ENCODE measurements at regions of chr19 and their contacts with region 1.

Region 1: GRCh38 chr19:57279418-57280066 is 743 bp upstream of the ZNF460 start:
- DNase-seq: peak; percentile 92
- ATAC-seq: peak; percentile 74
- H3K4me3 Mint-ChIP-seq: no peak overlapping the region
- H3K27ac Mint-ChIP-seq: no peak overlapping the region
- H3K4me1 Mint-ChIP-seq: peaks cover 31% of the 10 kb centered on the region
- H3K27me3 Mint-ChIP-seq: no peaks in the 10 kb centered on the region

Region 2: GRCh38 chr19:56538254-56538760 is 741.2 kb before region 1 on chr19:
- CTCF ChIA-PET with region 1: no interaction called
- POLR2A ChIA-PET with region 1: interaction called, 6 read pairs
- intact Hi-C with region 1: loop called in 1 of 2 experiments (anchors 1 kb)
- DNase-seq: peak; percentile 95
- ATAC-seq: peak; percentile 97
- H3K4me3 Mint-ChIP-seq: peak overlapping the region; percentile 74
- H3K27ac Mint-ChIP-seq: peak overlapping the region; percentile 87
- H3K4me1 Mint-ChIP-seq: peaks cover 15% of the 10 kb centered on the region
- H3K27me3 Mint-ChIP-seq: no peaks in the 10 kb centered on the region

Region 3: DNA sequence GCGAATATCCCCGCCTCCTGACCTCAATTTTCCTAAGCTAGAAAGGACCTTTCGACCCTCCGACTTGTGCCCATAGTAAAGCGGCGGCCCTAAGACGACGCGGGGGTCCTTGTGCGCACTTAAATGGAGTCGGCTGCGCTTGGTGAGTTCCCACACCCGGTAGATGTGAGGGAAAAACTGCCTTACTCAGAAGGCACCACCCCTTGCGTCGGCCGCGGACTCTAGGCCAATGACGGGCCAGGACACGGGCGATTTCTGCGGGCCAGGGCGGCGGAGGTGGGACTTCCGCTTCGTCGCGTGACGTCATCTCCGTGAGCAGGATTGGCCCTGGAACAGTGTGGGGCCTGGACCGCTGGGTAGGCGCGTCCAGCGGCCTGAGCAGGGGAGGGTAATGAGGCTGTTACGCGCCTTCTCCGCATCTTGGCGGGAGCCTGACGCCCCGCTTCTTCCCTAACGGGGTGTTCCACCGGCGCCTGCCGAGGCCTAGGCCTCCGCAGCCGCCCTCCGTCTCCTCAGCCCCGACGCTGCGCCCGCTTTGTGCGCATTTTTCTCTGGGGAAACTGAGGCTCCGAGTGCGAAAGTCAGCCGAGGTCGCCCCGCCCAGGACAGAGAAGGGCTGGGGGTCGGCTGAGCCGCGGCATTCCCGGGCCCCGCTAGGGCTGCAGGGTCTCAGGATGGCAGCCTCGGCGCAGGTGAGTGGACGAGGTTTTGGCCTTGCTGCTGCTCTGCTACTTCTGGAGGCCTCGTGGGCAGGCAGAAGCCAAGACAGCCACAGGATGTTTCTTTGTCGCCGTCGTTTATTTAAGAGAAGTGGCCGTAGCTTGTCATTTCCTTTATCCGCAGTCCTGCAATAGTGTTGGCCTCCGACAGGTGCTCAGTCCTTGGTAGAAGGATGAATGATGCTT is 40.9 kb after region 1 on chr19 and contains the start of gene ZNF543:
- CTCF ChIA-PET with region 1: no interaction called
- POLR2A ChIA-PET with region 1: no interaction called
- intact Hi-C with region 1: loop called (anchors 1 kb)
- DNase-seq: peak; percentile 97
- ATAC-seq: peak; percentile 98
- H3K4me3 Mint-ChIP-seq: peak within 1 kb of the TSS; percentile 94
- H3K27ac Mint-ChIP-seq: peak within 1 kb of the TSS; percentile 93
- H3K4me1 Mint-ChIP-seq: peaks cover 24% of the 10 kb centered on the region
- H3K27me3 Mint-ChIP-seq: peaks cover 22% of the 10 kb centered on the region
- total RNA-seq, gene ZNF543: 5.8 to 6.2 TPM

Region 4: DNA sequence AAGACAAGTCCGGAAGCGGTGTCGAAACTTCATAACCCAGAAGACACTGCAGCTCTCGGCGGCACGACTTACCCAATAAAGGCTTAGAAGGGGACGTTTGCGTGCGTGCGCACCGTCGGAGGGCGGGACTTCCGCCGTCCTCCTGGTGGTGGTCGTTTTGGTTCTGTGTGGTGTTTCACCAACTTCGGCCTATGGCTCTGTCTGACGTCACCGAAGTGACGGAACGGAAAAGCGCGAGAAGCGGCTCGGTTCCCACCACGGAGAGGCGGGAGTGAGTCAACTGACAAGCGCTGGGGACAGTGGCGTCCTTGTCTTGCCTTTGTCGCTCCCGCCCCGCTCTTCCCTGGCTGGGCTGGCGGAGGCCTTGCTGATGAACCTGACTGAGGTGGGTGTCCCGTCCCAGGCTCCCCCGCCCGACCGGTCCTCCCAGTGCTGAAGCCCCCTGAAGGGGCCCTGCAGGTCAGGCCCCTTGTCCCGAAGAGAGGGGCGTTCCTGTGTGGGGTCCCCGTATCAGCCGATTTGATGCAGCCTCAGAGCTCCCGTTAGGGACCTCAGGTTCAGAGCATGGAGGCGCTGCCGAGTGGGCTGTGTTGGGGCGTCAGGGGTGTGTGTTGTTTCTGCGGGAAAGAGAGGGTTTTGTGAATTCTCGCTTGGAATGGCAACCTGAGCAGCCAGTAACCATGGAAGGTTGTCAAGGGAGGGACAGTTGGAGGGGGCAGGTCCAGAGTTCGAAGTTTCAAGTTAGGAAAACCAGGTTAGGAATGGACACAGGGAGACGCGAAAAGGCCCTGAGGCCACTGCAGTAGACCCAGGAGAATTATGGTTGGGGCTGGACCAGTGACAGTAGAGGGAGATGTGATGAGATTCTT is 110.4 kb after region 1 on chr19 and contains the start of gene ZNF548:
- CTCF ChIA-PET with region 1: no interaction called
- POLR2A ChIA-PET with region 1: no interaction called
- intact Hi-C with region 1: loop called in 1 of 2 experiments (anchors 1 kb)
- DNase-seq: peak; percentile 97
- ATAC-seq: peak; percentile 99
- H3K4me3 Mint-ChIP-seq: peak within 1 kb of the TSS; percentile 90
- H3K27ac Mint-ChIP-seq: peak within 1 kb of the TSS; percentile 94
- H3K4me1 Mint-ChIP-seq: peaks cover 26% of the 10 kb centered on the region
- H3K27me3 Mint-ChIP-seq: no peaks in the 10 kb centered on the region
- total RNA-seq, gene ZNF548: 15.1 to 20.3 TPM

Region 5: DNA sequence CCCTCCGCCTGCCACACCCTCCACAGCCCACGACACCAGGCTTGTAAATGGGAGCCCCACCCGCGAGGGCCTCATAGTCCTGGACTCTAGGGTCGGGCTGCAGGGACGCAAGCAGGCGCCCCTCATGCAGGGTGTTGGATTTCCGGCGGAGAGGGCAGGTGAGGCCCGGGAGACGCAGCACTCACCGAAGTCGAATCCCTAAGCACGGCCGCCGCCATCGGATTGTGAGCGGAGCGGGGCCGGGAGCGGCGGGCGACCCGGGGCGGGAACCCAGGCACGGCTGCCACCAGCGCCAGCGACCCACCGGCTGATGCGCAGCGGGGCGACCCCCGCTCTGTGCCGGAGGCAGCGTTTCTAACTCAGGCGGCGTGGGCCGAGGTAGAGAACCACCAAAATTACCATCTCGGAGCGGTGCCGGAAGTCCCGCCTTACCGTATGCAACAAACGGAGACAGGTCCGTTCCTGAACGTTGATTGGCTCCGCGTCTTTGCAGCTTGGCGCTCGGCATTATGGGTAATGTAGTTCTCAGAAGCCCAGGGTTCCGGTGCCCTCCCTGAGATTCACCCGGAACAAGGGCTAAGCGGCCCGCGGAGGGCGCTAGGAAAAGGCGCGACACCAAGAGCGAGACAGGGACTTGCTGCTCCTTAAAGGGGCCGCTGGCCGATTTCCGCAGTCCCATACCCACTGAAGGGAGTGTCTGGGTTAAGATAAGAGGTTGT is 299.1 kb after region 1 on chr19 and contains the start of gene ZNF416:
- CTCF ChIA-PET with region 1: no interaction called
- POLR2A ChIA-PET with region 1: no interaction called
- intact Hi-C with region 1: loop called in 1 of 2 experiments (anchors 5 kb)
- DNase-seq: peak; percentile 97
- ATAC-seq: peak; percentile 96
- H3K4me3 Mint-ChIP-seq: peak within 1 kb of the TSS; percentile 77
- H3K27ac Mint-ChIP-seq: peak within 1 kb of the TSS; percentile 77
- H3K4me1 Mint-ChIP-seq: peaks cover 23% of the 10 kb centered on the region
- H3K27me3 Mint-ChIP-seq: no peaks in the 10 kb centered on the region
- total RNA-seq, gene ZNF416: 3.3 to 3.7 TPM

Region 6: DNA sequence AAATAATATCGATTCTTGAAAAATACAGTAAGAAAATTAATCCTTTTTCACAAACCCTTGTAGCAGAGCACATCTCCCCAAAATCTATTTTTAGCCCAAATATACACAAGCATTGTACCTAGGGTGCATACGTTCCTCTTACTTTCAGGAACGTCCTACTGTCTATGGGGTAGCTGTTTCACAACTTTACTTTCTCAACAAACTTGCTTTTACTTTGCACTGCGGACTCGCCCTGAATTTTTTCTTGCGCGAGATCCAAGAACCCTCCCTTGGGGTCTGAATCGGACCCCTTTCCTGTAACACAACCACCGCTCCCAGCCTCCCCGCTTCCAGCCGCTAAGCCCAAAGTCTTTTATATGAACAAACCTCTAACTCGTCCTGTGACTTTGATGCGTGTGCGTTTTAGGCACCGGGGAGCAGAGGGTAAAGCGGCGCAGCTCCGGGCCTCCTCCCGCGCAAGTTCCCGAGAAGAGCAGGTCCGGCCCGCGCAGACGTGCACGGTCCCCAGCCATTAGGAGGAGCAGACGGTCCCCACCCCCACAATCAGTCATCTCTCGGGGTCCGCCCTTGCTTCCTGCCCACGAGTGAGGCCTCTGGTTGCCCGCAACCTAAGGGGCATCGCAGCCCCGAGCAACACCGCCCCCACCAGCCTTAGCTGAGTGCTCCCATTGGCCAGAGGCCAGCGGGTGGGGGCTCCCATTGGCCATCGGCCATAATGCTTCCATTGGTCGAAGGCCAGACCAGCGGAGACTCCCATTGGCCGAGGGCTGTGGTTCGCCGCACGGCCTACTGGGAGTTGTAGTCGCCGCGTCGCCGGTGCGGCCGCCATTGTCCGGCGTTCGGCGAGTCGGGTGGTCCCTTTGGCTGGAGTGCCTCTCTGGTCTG is 998.9 kb after region 1 on chr19 and contains the start of gene ZNF8:
- CTCF ChIA-PET with region 1: no interaction called
- POLR2A ChIA-PET with region 1: no interaction called
- intact Hi-C with region 1: loop called in 1 of 2 experiments (anchors 2 kb)
- DNase-seq: peak; percentile 99
- ATAC-seq: peak; percentile 98
- H3K4me3 Mint-ChIP-seq: peak within 1 kb of the TSS; percentile 98
- H3K27ac Mint-ChIP-seq: peak within 1 kb of the TSS; percentile 95
- H3K4me1 Mint-ChIP-seq: peaks cover 28% of the 10 kb centered on the region
- H3K27me3 Mint-ChIP-seq: no peaks in the 10 kb centered on the region
- total RNA-seq, gene ZNF8: 4.4 to 4.5 TPM